ENCODE measurements at regions of chr10 and their contacts with region 1.

Region 1: DNA sequence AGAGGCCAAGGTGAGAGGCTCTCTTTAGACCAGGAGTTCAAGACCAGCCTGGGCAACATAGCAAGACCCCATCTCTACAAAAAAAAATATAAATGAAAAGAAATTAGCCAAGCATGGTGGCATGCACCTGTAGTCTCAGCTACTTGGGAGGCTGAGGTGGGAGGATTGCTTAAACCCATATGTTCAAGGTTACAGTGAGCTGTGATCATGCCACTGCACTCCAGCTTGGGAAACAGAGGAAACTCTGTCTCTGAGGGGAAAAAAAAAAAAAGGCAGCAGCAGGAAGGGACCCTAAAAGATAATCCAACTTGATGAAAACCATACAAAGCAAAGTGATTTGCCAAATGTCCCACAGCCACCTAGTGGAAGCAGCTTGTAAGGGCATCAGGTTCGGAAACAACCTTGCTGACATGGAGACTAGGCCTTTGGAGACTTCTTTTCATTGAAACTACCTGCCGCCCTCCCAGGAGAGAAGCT is 15.6 kb upstream of the PBLD start:
- H3K4me3 ChIP-seq: no peak overlapping the region
- H3K27ac ChIP-seq: no peak overlapping the region
- H3K4me1 ChIP-seq: no peaks in the 10 kb centered on the region
- CTCF ChIP-seq: peak; percentile 56; the same call in 1 of the 2 replicates

Region 2: GRCh38 chr10:68364101-68364886 is 16.0 kb after region 1 on chr10:
- CTCF ChIA-PET with region 1: interaction called, 6 read pairs
- POLR2A ChIA-PET with region 1: interaction called, 12 read pairs
- H3K4me3 ChIP-seq: no peak overlapping the region
- H3K27ac ChIP-seq: no peak overlapping the region
- H3K4me1 ChIP-seq: no peaks in the 10 kb centered on the region
- CTCF ChIP-seq: no peak

Region 3: DNA sequence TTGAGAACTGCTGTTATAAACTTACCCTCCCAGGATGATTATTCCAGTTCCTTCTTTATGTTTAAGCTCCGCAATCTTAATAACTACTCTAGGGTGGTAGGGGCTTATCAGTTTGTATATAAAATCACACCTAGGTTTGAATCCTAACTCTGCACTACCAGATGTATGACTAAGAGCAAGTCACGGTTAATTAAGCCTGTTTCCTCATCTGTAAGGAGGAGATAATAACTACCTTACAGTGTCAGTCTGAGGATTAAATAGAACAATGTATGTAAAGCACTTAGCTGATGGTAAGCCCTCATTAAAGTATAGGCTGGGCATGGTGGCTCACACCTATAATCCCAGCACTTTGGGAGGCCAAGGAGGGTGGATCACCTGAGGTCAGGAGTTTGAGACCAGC is 114.2 kb after region 1 on chr10:
- CTCF ChIA-PET with region 1: no interaction called
- POLR2A ChIA-PET with region 1: no interaction called
- H3K4me3 ChIP-seq: no peak overlapping the region
- H3K27ac ChIP-seq: no peak overlapping the region
- H3K4me1 ChIP-seq: no peaks in the 10 kb centered on the region
- CTCF ChIP-seq: no peak

Measured in HEK293 (cell line).